Tibial artery (tissue), 4 donors: ENCODE measurements at regions of chr2 and their contacts with region 1.

Region 1: DNA sequence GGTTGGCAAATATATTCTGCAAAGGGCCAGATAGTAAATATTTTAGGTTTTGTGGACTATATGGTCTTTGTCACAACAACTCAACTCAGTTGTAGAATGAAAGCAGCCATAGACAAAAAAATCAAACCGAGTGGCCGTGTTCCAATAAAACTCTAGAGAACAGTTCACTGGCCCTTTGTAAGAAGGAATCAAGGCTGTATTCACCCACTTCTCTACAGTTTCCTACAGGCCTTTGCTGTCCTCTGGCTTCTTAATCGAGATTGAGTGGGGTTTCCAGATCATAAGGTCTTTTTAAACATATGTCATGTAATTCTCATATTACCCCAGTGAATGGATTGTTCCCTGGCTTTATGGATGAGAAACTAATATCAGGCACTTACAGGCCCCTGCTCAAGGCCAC is 448.9 kb upstream of the ETAA1 start:
- DNase-seq: no peak
- H3K4me3 ChIP-seq: no peak overlapping the region
- H3K27ac ChIP-seq: no peak overlapping the region
- H3K4me1 ChIP-seq: no peaks in the 10 kb centered on the region
- H3K27me3 ChIP-seq: no peaks in the 10 kb centered on the region
- CTCF ChIP-seq: no peak

Region 2: GRCh38 chr2:66962625-66963207 is 14.5 kb after region 1 on chr2:
- intact Hi-C with region 1: loop called (anchors 1 kb)
- DNase-seq: no peak
- H3K4me3 ChIP-seq: no peak overlapping the region
- H3K27ac ChIP-seq: no peak overlapping the region
- H3K4me1 ChIP-seq: no peaks in the 10 kb centered on the region
- H3K27me3 ChIP-seq: no peaks in the 10 kb centered on the region
- CTCF ChIP-seq: no peak